Activated naive CD4-positive, alpha-beta T cell treated with anti-CD3 and anti-CD28 coated beads for 36 hours (primary cell): ENCODE measurements at regions of chr21 and their contacts with region 1.

Region 1: DNA sequence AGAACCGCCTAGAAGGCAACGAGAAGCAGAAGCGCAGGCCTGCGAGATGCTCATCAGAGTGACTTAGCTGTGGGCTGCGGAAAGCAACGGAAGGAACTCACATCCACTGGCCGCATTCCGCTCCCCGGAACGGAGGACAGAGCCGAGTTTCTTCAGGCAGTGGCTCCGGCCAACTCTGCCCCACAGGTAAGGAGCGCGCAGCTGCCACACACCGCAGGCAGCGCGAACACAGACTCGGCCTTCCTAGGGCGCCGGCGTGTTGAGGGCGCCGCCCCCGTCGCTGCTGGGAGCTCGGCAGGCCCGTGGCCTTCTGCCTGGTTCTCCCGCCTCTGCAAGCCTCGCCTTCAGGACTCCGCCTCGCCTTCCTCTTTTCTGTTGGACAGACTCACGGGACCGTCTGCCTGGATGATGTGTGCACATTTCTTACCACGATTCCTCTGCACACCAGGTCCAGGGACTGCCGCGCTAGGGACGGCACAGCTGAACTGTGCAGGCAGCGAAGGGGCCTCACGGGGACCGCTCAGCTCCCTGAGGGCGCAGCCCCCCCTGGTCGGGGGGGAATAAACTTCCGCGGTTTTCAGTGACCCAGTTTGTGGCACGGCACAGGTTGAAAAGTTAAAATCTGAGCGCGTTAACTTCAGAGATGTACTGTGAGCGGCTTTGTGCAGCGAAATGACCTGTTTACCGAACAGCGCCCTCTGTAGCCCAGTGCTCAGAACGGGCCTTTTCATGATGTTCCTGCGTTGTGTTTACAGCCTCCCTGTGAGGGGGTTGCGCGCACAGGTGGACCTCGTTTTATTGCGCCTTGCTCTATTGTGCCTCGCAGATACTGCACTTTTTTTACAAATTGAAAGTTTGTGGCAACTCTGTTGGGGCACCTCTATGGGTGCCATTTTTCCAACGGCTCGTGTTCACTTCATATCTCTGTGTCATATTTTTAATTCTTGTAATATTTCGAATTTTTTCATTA is 15.8 kb downstream of the TCP10L start:
- DNase-seq: peak; percentile 88
- H3K4me3 Mint-ChIP-seq: peak overlapping the region; percentile 70
- H3K27ac Mint-ChIP-seq: no peak overlapping the region
- H3K4me1 Mint-ChIP-seq: peaks cover 12% of the 10 kb centered on the region
- H3K27me3 Mint-ChIP-seq: no peaks in the 10 kb centered on the region

Region 2: DNA sequence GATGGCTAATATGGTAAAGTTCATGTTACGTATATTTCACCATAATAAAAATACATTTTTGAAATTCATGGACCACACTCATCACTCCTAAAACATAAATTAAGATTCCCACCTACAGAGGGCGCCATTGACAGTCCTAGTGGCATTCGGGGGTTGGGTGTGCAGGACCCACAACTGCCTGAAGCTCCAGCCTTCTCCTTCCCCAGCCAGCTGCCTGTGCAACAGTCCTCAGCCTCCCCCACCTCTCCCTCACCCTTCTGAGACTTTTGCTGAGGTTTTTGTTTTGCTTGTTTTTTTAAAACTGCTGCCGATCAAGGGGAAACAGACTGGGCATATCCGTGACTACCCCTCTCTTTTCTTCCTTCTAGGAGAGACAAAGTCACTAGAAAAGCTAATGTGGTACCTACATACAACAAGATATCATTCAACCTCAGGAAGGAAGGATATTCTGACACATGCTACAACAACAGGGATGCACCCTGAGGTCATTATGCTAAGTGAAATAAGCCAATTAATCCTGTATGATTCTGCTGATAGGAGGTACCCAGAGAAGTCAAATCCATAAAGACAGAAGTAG is 166.3 kb before region 1 on chr21:
- CTCF ChIA-PET with region 1: interaction called, 31 read pairs
- intact Hi-C with region 1: loop called (anchors 1 kb)
- DNase-seq: peak; percentile 68
- H3K4me3 Mint-ChIP-seq: no peak overlapping the region
- H3K27ac Mint-ChIP-seq: no peak overlapping the region
- H3K4me1 Mint-ChIP-seq: no peaks in the 10 kb centered on the region
- H3K27me3 Mint-ChIP-seq: no peaks in the 10 kb centered on the region

Region 3: DNA sequence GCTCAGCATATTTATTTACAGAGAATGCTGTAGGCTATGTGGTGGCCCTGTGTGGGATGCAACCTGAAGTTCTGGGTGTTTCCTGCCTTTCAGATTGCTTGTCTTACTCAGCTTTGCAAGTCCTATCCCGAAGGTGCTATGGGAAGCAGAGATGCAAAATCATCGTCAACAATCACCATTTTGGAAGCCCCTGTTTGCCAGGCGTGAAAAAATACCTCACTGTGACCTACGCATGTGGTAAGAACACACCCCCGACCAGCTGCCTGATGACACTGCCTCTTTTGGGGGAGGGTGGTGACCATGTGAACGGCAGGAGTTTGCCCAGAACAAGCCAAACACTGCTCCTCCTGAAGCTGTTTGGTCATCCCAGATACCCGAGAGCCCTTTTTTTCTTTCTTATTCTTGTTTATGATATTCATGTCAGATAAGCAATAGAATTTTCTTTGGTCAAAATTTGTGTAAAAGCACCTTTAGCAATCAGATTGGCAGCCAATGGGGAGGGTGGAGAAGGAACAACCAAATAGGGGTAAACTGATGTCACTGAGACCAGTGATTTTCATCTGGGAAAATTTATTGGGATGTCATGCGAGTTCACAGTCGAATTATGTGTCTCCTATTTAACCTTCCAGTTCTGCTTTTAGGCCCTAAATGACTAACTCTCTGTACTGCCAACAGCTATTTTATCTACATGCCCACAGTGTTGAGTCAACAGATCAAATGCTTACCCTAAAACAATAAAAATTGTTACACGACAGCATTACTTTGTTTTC is 74.4 kb before region 1 on chr21:
- CTCF ChIA-PET with region 1: interaction called, 3 read pairs
- intact Hi-C with region 1: loop called (anchors 5 kb)
- DNase-seq: no peak
- H3K4me3 Mint-ChIP-seq: no peak overlapping the region
- H3K27ac Mint-ChIP-seq: no peak overlapping the region
- H3K4me1 Mint-ChIP-seq: peaks cover 2% of the 10 kb centered on the region
- H3K27me3 Mint-ChIP-seq: no peaks in the 10 kb centered on the region

Region 4: DNA sequence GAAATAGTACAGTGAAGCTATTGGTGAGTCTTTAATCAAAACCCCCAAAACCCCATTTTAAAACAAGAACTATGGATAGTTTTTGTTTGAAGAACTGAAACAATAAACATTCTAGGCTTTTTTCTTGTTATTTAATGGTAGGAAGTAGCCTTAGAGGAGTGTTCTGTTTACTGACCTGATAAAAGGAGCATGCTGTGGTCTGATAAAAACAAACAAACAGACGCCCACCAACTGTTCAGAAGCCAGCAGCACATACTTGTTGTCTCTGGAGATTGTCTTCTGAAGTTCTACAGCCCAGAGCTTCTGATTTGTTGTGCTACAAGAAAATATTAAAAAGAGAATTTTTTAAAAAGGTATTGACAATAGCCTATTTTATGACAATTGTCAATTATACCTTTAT is 96.7 kb after region 1 on chr21:
- CTCF ChIA-PET with region 1: no interaction called
- intact Hi-C with region 1: no loop called
- DNase-seq: no peak
- H3K4me3 Mint-ChIP-seq: no peak overlapping the region
- H3K27ac Mint-ChIP-seq: no peak overlapping the region
- H3K4me1 Mint-ChIP-seq: no peaks in the 10 kb centered on the region
- H3K27me3 Mint-ChIP-seq: no peaks in the 10 kb centered on the region